ENCODE measurements at regions of chr4 and their contacts with region 1.

Region 1: DNA sequence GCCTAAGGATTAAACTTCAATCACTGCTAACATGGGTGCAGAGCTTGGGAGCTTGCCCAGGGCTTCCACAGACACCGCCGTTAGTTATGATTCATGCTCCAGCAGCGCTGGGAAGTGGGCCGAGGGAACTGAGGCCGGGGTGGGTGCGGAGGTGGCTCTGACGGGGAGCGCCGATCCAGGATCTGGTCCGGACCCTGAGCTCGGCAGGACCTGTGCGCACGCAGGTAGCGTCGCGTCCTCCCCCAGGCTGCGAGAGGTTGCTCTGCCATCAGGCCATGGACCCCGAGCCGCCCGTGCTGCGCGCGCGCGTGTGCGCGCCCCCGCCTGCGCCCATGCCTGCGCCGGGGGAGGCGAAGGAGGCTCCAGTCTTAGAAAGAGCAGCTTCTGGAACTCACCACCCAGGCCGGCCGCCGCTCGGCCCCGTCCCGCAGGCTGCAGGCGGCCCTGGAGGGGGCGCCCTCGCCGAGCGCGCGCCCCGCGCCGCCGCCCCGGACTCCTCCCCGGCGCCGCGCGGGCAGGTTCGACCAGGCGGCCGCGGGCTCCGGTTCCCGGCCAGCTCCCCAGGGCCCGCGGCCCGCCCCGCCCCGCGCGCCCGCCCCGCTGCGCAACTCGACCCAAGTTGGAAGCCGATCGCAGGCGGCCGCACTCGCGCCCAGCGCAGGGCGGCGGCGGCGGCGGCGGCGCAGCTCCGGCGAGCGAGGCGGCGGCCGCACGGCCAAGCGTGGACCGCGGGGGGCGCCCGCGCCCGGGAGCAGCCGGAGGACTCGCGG is 729 bp upstream of the ADRA2C start:
- DNase-seq: peak; percentile 41
- ATAC-seq: peak; percentile 74
- H3K4me3 ChIP-seq: peak overlapping the region; percentile 54 to 75 (median 55); a peak in 5 of 6 replicates
- H3K27ac ChIP-seq: no peak overlapping the region
- H3K4me1 ChIP-seq: peaks cover 47% of the 10 kb centered on the region
- H3K27me3 ChIP-seq: no peaks in the 10 kb centered on the region; a peak in 2 of 5 replicates
- CTCF ChIP-seq: peak; percentile 32; the same call in 1 of the 2 replicates
- EP300 ChIP-seq: no peak
- POLR2A ChIP-seq: no peak
- RAD21 ChIP-seq: peak; percentile 69

Region 2: GRCh38 chr4:3655963-3656362 is 109.5 kb before region 1 on chr4:
- CTCF ChIA-PET with region 1: no interaction called
- POLR2A ChIA-PET with region 1: no interaction called
- in situ Hi-C with region 1: no loop called
- intact Hi-C with region 1: no loop called
- DNase-seq: no peak
- ATAC-seq: no peak
- H3K4me3 ChIP-seq: no peak overlapping the region
- H3K27ac ChIP-seq: no peak overlapping the region
- H3K4me1 ChIP-seq: peaks cover 15% of the 10 kb centered on the region
- H3K27me3 ChIP-seq: peaks cover 8 to 80% of the 10 kb centered on the region in 2 experiments
- CTCF ChIP-seq: no peak
- EP300 ChIP-seq: no peak
- POLR2A ChIP-seq: no peak
- RAD21 ChIP-seq: no peak

Region 3: DNA sequence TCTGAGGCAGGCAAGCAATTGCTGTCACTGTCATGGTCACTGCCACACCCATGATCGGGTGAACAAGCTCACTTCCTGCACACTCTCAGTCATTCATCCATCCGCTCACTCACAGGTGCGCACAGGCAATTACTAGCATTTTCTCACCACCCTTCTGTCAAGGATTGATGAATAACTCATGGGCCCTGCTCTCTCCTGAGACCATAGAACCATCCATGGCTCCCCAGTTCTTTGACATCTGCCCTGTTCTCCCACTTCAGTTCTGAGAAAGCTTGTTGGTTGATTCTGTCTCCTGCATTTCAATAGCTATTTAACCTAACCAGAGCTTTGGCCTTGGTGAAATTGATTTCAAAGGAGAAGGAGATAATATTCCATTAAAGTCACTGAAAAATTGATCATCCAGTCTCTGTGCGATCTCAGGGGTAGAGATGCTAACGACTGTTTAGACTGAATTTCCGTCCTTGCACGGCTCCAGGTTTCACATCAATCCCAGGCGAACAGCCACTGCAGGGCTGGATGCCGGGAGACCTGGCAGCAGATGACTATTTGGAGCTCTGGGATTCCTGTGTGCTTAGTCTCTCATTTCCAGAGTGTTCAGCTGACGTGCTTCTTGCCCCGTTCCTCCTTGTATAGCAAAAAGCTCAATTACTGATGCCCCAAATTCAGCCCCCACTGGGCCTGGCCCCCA is 36.1 kb before region 1 on chr4:
- CTCF ChIA-PET with region 1: no interaction called
- POLR2A ChIA-PET with region 1: no interaction called
- in situ Hi-C with region 1: no loop called
- intact Hi-C with region 1: no loop called
- DNase-seq: no peak
- ATAC-seq: no peak
- H3K4me3 ChIP-seq: no peak overlapping the region
- H3K27ac ChIP-seq: no peak overlapping the region
- H3K4me1 ChIP-seq: no peaks in the 10 kb centered on the region
- H3K27me3 ChIP-seq: peaks cover 10 to 47% of the 10 kb centered on the region in 2 experiments
- CTCF ChIP-seq: no peak
- EP300 ChIP-seq: no peak
- POLR2A ChIP-seq: no peak
- RAD21 ChIP-seq: no peak

Region 4: GRCh38 chr4:3827616-3828492 is 62.4 kb after region 1 on chr4:
- CTCF ChIA-PET with region 1: no interaction called
- POLR2A ChIA-PET with region 1: interaction called, 14 read pairs
- in situ Hi-C with region 1: no loop called
- intact Hi-C with region 1: no loop called
- DNase-seq: peak; percentile 85
- ATAC-seq: peak; percentile 75
- H3K4me3 ChIP-seq: peak overlapping the region; percentile 4 to 61 (median 5); a peak in 3 of 6 replicates
- H3K27ac ChIP-seq: peak overlapping the region; percentile 91
- H3K4me1 ChIP-seq: peaks cover 100% of the 10 kb centered on the region
- H3K27me3 ChIP-seq: no peaks in the 10 kb centered on the region
- CTCF ChIP-seq: peak; percentile 47
- EP300 ChIP-seq: peak in 1 of 2 experiments; percentile 54; a peak in 1 of 4 replicates
- POLR2A ChIP-seq: peak in 1 of 2 experiments; percentile 38; a peak in 1 of 4 replicates
- RAD21 ChIP-seq: peak; percentile 56

Region 5: GRCh38 chr4:3836756-3837601 is 71.5 kb after region 1 on chr4:
- CTCF ChIA-PET with region 1: no interaction called
- POLR2A ChIA-PET with region 1: interaction called, 13 read pairs
- in situ Hi-C with region 1: no loop called
- intact Hi-C with region 1: no loop called
- DNase-seq: peak; percentile 99
- ATAC-seq: peak; percentile 89
- H3K4me3 ChIP-seq: no peak overlapping the region
- H3K27ac ChIP-seq: peak overlapping the region; percentile 95
- H3K4me1 ChIP-seq: peaks cover 79% of the 10 kb centered on the region
- H3K27me3 ChIP-seq: no peaks in the 10 kb centered on the region
- CTCF ChIP-seq: peak; percentile 56
- EP300 ChIP-seq: peak; percentile 97 to 98; a peak in 3 of 4 replicates
- POLR2A ChIP-seq: no peak
- RAD21 ChIP-seq: 0 out of 2 replicates have a peak, but pooled peaks have one; percentile 49

Region 6: DNA sequence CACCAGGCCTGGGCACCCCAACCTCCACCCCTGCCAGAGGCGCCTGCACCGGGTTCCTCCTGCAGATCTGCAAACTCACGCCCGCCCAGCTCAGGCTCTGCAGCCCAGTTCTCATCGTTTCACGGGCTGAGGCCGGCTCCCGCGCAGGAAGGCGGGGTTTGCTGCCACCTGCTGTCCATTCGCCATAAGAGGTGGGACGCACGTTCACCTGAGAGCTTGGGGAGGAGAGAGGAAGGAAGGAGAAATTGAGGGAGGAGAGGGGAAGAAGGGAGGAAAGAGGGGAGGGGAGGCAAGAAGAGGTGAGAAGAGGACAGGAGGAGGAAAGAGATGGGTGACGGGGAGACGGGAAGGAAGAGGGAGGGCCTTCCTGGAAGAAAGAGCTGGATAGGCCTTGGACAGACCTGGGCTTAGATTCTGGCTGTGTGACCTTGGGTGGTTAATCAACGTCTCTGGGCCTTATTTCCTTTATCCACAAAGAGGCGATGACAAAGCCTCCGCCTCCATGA is 115.2 kb after region 1 on chr4:
- CTCF ChIA-PET with region 1: interaction called, 14 read pairs
- POLR2A ChIA-PET with region 1: interaction called, 9 read pairs
- in situ Hi-C with region 1: no loop called
- intact Hi-C with region 1: no loop called
- DNase-seq: peak; percentile 56
- ATAC-seq: peak; percentile 96
- H3K4me3 ChIP-seq: no peak overlapping the region
- H3K27ac ChIP-seq: no peak overlapping the region
- H3K4me1 ChIP-seq: peaks cover 16% of the 10 kb centered on the region
- H3K27me3 ChIP-seq: peaks cover 0 to 20% of the 10 kb centered on the region in 2 experiments; a peak in 2 of 5 replicates
- CTCF ChIP-seq: peak; percentile 96
- EP300 ChIP-seq: no peak
- POLR2A ChIP-seq: no peak
- RAD21 ChIP-seq: peak; percentile 96